ENCODE measurements at regions of chr2 and their contacts with region 1.

Region 1: GRCh38 chr2:65382776-65383357 is 49.5 kb downstream of the SPRED2 start:
- DNase-seq: peak; percentile 99
- H3K4me3 ChIP-seq: no peak overlapping the region
- H3K27ac ChIP-seq: peak overlapping the region; percentile 85
- H3K4me1 ChIP-seq: peaks cover 84% of the 10 kb centered on the region
- H3K27me3 ChIP-seq: no peaks in the 10 kb centered on the region
- CTCF ChIP-seq: peak; percentile 32 to 63

Region 2: DNA sequence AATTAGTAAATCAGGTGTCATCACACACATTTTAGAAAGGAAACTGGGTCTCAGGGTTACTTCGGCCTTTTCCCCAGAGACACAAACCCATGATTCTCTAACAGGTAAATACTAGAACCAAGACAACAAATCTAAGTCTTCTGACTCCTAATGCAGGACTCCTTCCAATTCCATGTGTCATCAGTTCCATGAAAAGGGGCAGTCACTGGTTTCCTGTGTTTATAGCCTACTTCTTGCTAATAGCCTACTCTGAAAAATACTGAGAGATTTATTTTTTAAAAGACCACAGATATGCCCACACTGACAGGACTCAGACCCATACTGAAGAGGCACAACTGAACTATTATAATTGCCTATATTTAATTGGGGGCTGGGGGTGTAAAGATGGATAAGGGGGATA is 285.9 kb before region 1 on chr2:
- CTCF ChIA-PET with region 1: no interaction called
- dilution Hi-C with region 1: no loop called
- in situ Hi-C with region 1: no loop called
- intact Hi-C with region 1: no loop called
- DNase-seq: peak; percentile 6
- H3K4me3 ChIP-seq: no peak overlapping the region
- H3K27ac ChIP-seq: no peak overlapping the region
- H3K4me1 ChIP-seq: no peaks in the 10 kb centered on the region
- H3K27me3 ChIP-seq: no peaks in the 10 kb centered on the region
- CTCF ChIP-seq: no peak

Region 3: DNA sequence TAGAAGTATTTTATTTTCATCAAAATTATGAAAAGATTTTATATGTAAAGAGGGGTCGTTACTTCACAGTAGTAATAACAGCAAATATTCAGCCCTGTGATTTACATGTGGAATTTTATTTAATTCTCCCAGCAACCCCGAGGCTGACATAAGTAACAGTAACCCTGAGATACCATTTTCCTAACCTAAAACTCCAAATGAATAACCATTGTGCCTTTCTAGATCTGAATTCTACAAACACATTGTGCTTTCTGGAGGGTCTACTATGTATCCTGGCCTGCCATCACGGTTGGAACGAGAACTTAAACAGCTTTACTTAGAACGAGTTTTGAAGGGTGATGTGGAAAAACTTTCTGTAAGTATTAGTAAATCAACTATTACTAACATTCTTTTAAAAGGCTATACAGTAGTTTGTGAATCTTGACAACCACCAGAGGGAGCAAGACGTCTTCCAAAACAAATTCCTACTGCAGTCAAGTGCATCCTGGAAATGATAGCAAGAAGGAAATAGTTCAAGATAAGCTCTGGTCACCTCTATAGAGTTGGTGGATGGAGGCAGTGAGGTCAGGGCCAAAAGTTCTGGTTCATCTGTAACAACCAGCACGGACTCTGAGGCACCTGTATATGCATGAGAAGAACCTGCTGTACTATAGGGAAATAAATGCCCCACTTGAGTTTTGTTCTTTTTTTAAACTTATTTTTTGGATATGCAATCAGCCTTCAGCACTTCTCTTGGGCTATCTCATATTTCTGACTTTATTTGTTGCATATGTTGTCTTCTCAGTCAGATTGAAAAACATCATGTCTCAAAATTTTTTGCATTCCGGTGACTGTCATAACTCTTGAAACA is 117.8 kb before region 1 on chr2:
- CTCF ChIA-PET with region 1: no interaction called
- dilution Hi-C with region 1: no loop called
- in situ Hi-C with region 1: no loop called
- intact Hi-C with region 1: loop called (anchors 2 kb)
- DNase-seq: peak; percentile 51
- H3K4me3 ChIP-seq: no peak overlapping the region
- H3K27ac ChIP-seq: no peak overlapping the region
- H3K4me1 ChIP-seq: no peaks in the 10 kb centered on the region
- H3K27me3 ChIP-seq: no peaks in the 10 kb centered on the region
- CTCF ChIP-seq: peak; percentile 53 to 64

Region 4: GRCh38 chr2:65340898-65341681 is 41.8 kb before region 1 on chr2:
- CTCF ChIA-PET with region 1: no interaction called
- dilution Hi-C with region 1: loop called (anchors 5 kb)
- in situ Hi-C with region 1: no loop called
- intact Hi-C with region 1: no loop called
- DNase-seq: no peak
- H3K4me3 ChIP-seq: no peak overlapping the region
- H3K27ac ChIP-seq: no peak overlapping the region
- H3K4me1 ChIP-seq: no peaks in the 10 kb centered on the region
- H3K27me3 ChIP-seq: no peaks in the 10 kb centered on the region
- CTCF ChIP-seq: no peak

Region 5: DNA sequence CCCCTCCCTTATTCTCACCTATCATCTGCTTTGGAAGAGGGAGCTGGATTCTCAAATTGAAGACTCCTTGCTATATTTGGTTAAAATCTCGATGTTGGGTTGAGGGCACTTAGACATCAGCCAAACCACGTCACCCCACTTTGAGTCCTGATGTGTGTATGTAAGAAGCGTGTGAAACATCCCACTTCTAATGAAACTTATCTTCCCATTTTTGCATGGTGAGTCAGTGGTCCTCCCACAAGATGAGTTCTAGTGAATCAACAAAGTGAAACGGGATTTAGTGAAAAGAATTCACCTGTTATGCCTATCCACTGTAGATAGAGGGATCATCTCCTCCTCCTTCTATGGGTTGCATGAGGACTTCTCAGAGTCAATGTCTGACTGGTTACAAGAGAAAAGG is 100.9 kb after region 1 on chr2:
- CTCF ChIA-PET with region 1: no interaction called
- dilution Hi-C with region 1: loop called (anchors 5 kb)
- in situ Hi-C with region 1: no loop called
- intact Hi-C with region 1: no loop called
- DNase-seq: no peak
- H3K4me3 ChIP-seq: no peak overlapping the region
- H3K27ac ChIP-seq: no peak overlapping the region
- H3K4me1 ChIP-seq: no peaks in the 10 kb centered on the region
- H3K27me3 ChIP-seq: no peaks in the 10 kb centered on the region
- CTCF ChIP-seq: no peak

Region 6: GRCh38 chr2:65566620-65567019 is 183.8 kb after region 1 on chr2:
- CTCF ChIA-PET with region 1: no interaction called
- dilution Hi-C with region 1: no loop called
- in situ Hi-C with region 1: no loop called
- intact Hi-C with region 1: loop called (anchors 2 kb)
- DNase-seq: peak; percentile 88
- H3K4me3 ChIP-seq: peak overlapping the region; percentile 43 to 67 (median 49)
- H3K27ac ChIP-seq: peak overlapping the region; percentile 96
- H3K4me1 ChIP-seq: peaks cover 19% of the 10 kb centered on the region
- H3K27me3 ChIP-seq: no peaks in the 10 kb centered on the region
- CTCF ChIP-seq: no peak

Measured in mammary epithelial cell (primary cell).